ENCODE measurements at regions of chr11 and their contacts with region 1.

Region 1: GRCh38 chr11:4181782-4182721 is 87.5 kb downstream of the RRM1 start:
- DNase-seq: peak; percentile 78 to 83
- H3K4me3 ChIP-seq: no peak overlapping the region
- H3K4me3 Mint-ChIP-seq: no peak overlapping the region
- H3K27ac Mint-ChIP-seq: no peak overlapping the region
- H3K4me1 ChIP-seq: no peaks in the 10 kb centered on the region
- H3K4me1 Mint-ChIP-seq: no peaks in the 10 kb centered on the region
- H3K27me3 ChIP-seq: no peaks in the 10 kb centered on the region
- H3K27me3 Mint-ChIP-seq: no peaks in the 10 kb centered on the region
- CTCF ChIP-seq: peak; percentile 83 to 92

Region 2: DNA sequence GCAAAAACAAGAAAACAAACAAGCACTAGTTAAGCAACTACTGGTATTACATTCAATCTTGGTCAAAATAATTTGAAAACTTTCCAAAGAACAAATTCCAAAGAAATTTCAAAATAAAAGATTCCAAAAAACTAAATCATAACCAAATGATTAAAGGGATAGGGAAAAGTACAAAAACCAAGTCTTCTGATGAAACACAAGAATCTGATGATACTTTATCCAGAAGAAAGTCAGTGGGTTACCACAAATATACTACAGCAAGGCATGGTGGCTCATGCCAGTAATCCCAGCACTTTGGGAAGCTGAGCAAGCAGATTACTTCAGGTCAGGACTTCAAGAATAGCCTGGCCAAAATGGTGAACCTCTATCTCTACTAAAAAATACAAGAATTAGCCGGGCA is 443.8 kb before region 1 on chr11:
- CTCF ChIA-PET with region 1: no interaction called
- POLR2A ChIA-PET with region 1: no interaction called
- intact Hi-C with region 1: no loop called
- DNase-seq: no peak
- H3K4me3 ChIP-seq: no peak overlapping the region
- H3K4me3 Mint-ChIP-seq: no peak overlapping the region
- H3K27ac Mint-ChIP-seq: no peak overlapping the region
- H3K4me1 ChIP-seq: no peaks in the 10 kb centered on the region
- H3K4me1 Mint-ChIP-seq: peaks cover 6% of the 10 kb centered on the region
- H3K27me3 ChIP-seq: no peaks in the 10 kb centered on the region
- H3K27me3 Mint-ChIP-seq: no peaks in the 10 kb centered on the region
- CTCF ChIP-seq: no peak

Region 3: DNA sequence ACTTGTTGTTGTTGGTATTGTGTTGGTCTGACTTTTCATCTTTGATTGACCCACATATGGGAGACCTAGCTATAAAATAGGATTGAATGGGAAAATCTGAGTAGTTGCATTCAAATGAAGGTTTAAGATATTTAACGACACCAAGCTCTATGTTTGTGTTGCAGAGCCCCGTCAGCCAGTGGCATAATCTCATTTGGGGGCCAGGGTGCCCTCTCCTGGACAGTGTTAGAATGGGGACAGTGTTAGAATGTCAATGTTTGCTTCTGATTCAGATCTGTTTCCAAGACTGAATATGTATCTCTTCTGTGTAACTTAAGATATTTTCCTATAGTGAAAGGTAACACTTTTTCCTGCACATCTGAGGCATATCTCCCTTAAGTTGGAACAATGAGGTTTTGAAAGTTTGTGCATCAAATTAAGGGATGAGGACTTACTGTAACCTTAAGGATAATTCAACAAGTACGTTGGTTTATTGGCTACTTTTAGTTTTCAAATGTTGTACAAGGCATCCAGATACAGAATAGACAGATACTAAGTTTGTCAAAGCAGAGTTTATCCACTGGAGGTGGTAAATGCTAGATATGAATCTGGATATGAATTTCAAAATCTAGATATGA is 357.7 kb after region 1 on chr11:
- CTCF ChIA-PET with region 1: interaction called, 60 read pairs
- POLR2A ChIA-PET with region 1: no interaction called
- intact Hi-C with region 1: loop called (anchors 1 kb)
- DNase-seq: peak in 1 of 2 experiments; percentile 59
- H3K4me3 ChIP-seq: no peak overlapping the region
- H3K4me3 Mint-ChIP-seq: no peak overlapping the region
- H3K27ac Mint-ChIP-seq: no peak overlapping the region
- H3K4me1 ChIP-seq: no peaks in the 10 kb centered on the region
- H3K4me1 Mint-ChIP-seq: no peaks in the 10 kb centered on the region
- H3K27me3 ChIP-seq: peaks cover 2% of the 10 kb centered on the region
- H3K27me3 Mint-ChIP-seq: peaks cover 3% of the 10 kb centered on the region
- CTCF ChIP-seq: peak; percentile 71 to 83

Region 4: GRCh38 chr11:5004424-5005274 is 822.6 kb after region 1 on chr11:
- CTCF ChIA-PET with region 1: no interaction called
- POLR2A ChIA-PET with region 1: no interaction called
- intact Hi-C with region 1: loop called (anchors 2 kb)
- DNase-seq: peak in 1 of 2 experiments; percentile 58
- H3K4me3 ChIP-seq: no peak overlapping the region
- H3K4me3 Mint-ChIP-seq: no peak overlapping the region
- H3K27ac Mint-ChIP-seq: no peak overlapping the region
- H3K4me1 ChIP-seq: no peaks in the 10 kb centered on the region
- H3K4me1 Mint-ChIP-seq: no peaks in the 10 kb centered on the region
- H3K27me3 ChIP-seq: no peaks in the 10 kb centered on the region
- H3K27me3 Mint-ChIP-seq: peaks cover 6% of the 10 kb centered on the region
- CTCF ChIP-seq: peak; percentile 72 to 78

Measured in Caco-2 (cell line).